Panc1 (cell line): ENCODE measurements at regions of chr21 and their contacts with region 1.

Region 1: GRCh38 chr21:41121785-41122421 is 46.1 kb upstream of the BACE2 start:
- DNase-seq: peak; percentile 54
- ATAC-seq: peak; percentile 95
- H3K4me3 ChIP-seq: no peak overlapping the region
- H3K27ac ChIP-seq: no peak overlapping the region
- H3K4me1 ChIP-seq: no peaks in the 10 kb centered on the region
- H3K27me3 ChIP-seq: peaks cover 5% of the 10 kb centered on the region
- CTCF ChIP-seq: peak; percentile 93

Region 2: DNA sequence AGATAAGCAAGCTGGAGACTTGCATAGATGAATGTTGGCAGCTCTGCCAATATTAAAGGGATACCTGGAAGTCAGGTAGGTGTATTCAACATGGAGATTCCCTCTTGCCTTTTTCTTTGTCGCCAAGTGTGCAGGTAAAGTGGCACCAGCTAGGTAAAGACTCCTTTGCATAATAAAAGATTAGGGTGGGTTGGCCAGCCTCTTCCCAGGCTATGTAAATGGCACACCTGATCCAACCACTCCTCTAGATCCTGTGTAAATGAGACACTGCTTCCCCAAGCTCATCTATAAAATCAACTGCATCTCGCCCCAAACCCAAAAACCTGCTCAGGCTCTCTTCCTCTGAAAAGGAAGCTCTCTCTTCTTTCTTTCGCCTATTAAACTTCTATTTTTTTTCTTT is 174.2 kb before region 1 on chr21:
- CTCF ChIA-PET with region 1: no interaction called
- POLR2A ChIA-PET with region 1: no interaction called
- in situ Hi-C with region 1: no loop called
- intact Hi-C with region 1: no loop called
- DNase-seq: no peak
- ATAC-seq: no peak
- H3K4me3 ChIP-seq: no peak overlapping the region
- H3K27ac ChIP-seq: no peak overlapping the region
- H3K4me1 ChIP-seq: no peaks in the 10 kb centered on the region
- H3K27me3 ChIP-seq: no peaks in the 10 kb centered on the region
- CTCF ChIP-seq: no peak

Region 3: GRCh38 chr21:41167348-41168342 is 45.7 kb after region 1 on chr21 and contains the start of gene BACE2:
- CTCF ChIA-PET with region 1: no interaction called
- POLR2A ChIA-PET with region 1: no interaction called
- in situ Hi-C with region 1: no loop called
- intact Hi-C with region 1: no loop called
- DNase-seq: no peak
- ATAC-seq: peak; percentile 95
- H3K4me3 ChIP-seq: peak within 1 kb of the TSS; percentile 54 to 59
- H3K27ac ChIP-seq: peak within 1 kb of the TSS; percentile 54; the same call in 1 of the 2 replicates
- H3K4me1 ChIP-seq: peaks cover 6% of the 10 kb centered on the region
- H3K27me3 ChIP-seq: no peaks in the 10 kb centered on the region
- CTCF ChIP-seq: peak; percentile 80
- total RNA-seq, gene BACE2: 16.3 TPM

Region 4: GRCh38 chr21:41277846-41278245 is 155.9 kb after region 1 on chr21:
- CTCF ChIA-PET with region 1: no interaction called
- POLR2A ChIA-PET with region 1: no interaction called
- in situ Hi-C with region 1: no loop called
- intact Hi-C with region 1: loop called (anchors 10 kb)
- DNase-seq: no peak
- ATAC-seq: no peak
- H3K4me3 ChIP-seq: no peak overlapping the region
- H3K27ac ChIP-seq: no peak overlapping the region
- H3K4me1 ChIP-seq: no peaks in the 10 kb centered on the region
- H3K27me3 ChIP-seq: peaks cover under 1% of the 10 kb centered on the region; the same call in 1 of the 2 replicates
- CTCF ChIP-seq: no peak